ENCODE measurements at regions of chr6 and their contacts with region 1.

Region 1: DNA sequence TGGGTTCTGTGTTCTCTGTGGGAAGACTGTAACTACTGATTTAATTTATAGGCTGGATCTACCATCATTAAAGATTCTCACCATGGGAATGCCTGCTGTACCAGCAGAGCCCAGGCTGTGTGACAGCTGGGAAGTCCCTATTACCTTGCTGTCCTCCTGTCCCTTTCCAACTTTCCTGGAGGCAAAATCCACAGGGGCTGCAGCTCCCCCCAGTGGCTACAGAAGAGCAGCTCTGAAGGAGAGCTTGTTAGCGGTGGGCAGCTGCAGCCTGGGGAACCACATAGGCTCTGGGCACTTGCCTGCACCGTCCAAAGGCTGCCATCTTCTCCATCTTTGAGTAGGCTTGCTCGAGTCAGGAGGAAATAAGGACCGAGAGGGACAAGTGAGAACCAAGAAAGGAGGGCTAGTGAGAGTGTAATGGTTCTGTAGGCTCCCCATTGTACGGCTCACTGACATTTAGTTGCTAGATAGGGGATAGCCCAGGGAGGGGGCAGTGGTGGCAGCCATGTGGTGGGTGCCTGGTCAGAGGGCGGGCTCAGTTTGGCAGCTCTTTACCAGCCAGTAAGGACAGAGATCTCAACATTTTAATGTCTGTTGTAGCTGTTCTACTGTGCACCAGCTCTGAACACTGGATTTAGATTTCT is 155.1 kb upstream of the MLIP start:
- DNase-seq: no peak
- H3K4me3 ChIP-seq: no peak overlapping the region
- H3K27ac ChIP-seq: peak overlapping the region in 2 of 4 donors; percentile 12 to 33
- H3K4me1 ChIP-seq: peaks cover 0 to 12% (median 0%) of the 10 kb centered on the region in 3 donors
- H3K27me3 ChIP-seq: no peaks in the 10 kb centered on the region
- CTCF ChIP-seq: peak; percentile 30 to 86 (median 66)
- POLR2A ChIP-seq: no peak

Region 2: DNA sequence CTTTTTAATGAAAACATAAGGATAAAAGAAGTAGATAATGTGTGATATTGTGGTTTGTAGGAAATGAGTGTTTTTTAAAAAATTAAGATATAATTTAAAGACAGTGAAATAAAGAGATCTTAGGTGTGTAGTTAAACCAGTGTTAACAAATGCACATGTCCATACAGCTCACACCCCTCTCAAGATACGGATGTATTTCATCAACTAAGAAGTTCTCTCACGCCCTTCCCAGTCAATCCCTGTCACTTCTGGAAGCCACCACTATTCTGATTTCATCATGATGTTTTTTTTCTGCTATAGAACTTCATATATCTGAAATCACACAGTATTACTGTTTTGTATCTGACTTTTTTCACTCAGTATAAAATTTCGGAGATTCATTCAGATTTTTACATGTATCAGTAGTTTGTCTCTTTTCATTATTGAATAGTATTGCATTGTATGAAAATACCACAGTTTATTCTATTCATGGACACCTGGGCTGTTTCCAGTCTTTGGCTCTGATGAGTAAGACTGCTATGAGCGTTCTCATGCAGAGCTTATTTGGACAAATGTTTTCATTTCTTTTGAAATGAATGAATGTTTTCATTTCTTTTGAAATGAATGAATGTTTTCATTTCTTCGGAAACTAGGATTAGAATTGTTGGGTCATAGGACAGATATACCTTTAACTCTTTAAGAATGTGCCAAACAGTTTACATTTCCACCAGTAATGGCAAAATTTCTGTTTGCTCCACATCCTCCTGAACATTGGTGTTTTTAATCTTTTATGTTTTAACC is 557.8 kb before region 1 on chr6:
- intact Hi-C with region 1: no loop called
- DNase-seq: no peak
- H3K4me3 ChIP-seq: no peak overlapping the region
- H3K27ac ChIP-seq: no peak overlapping the region
- H3K4me1 ChIP-seq: no peaks in the 10 kb centered on the region
- H3K27me3 ChIP-seq: no peaks in the 10 kb centered on the region
- CTCF ChIP-seq: no peak
- POLR2A ChIP-seq: no peak

Region 3: GRCh38 chr6:53794720-53795253 is 161.4 kb before region 1 on chr6 and contains the start of gene LRRC1:
- intact Hi-C with region 1: loop called (anchors 10 kb)
- DNase-seq: peak; percentile 37
- H3K4me3 ChIP-seq: peak within 1 kb of the TSS; percentile 73 to 94 (median 80)
- H3K27ac ChIP-seq: peak within 1 kb of the TSS; percentile 85 to 94 (median 91)
- H3K4me1 ChIP-seq: peaks cover 0 to 63% (median 23%) of the 10 kb centered on the region in 3 donors
- H3K27me3 ChIP-seq: no peaks in the 10 kb centered on the region
- CTCF ChIP-seq: peak in 1 of 6 experiments; percentile 0
- POLR2A ChIP-seq: peak in 3 of 4 donors; percentile 50 to 83 (median 58)
- total RNA-seq, gene LRRC1: 23.2 to 38.5 (median 28.3) TPM

Measured in esophagus squamous epithelium (tissue), 5 donors.